Heart right ventricle (tissue), 16 donors: ENCODE measurements at regions of chr6 and their contacts with region 1.

Region 1: DNA sequence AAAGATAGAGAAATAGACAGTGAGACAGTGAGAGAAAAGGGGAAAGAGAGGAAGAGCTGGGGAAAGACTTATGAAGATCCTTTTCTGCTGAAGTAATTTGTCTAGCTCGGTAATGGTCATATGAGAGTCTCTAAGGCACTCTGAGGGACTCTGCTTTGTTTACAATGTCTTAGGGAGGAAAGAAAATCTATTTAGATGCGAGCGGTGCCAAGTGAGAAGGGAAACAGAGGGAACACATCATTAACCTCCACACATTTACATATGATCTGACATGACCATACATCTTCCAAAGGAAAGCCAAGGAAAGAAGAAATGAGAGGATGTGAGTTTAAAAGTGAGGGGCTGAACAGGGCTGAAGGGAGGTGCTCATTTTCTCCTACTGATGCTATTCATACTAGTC is 862.3 kb upstream of the CITED2 start:
- DNase-seq: no peak
- ATAC-seq: no peak
- H3K4me3 ChIP-seq: no peak overlapping the region
- H3K27ac ChIP-seq: no peak overlapping the region
- H3K4me1 ChIP-seq: no peaks in the 10 kb centered on the region
- H3K27me3 ChIP-seq: no peaks in the 10 kb centered on the region
- CTCF ChIP-seq: no peak

Region 2: GRCh38 chr6:139778688-139779087 is 458.0 kb before region 1 on chr6:
- intact Hi-C with region 1: no loop called
- DNase-seq: peak in 1 of 2 donors; percentile 16
- ATAC-seq: peak in 7 of 8 donors; percentile 61 to 95 (median 92)
- H3K4me3 ChIP-seq: no peak overlapping the region
- H3K27ac ChIP-seq: peak overlapping the region in 5 of 10 donors; percentile 45 to 72 (median 69)
- H3K4me1 ChIP-seq: peaks cover 0 to 16% (median 0%) of the 10 kb centered on the region in 9 donors
- H3K27me3 ChIP-seq: no peaks in the 10 kb centered on the region
- CTCF ChIP-seq: no peak

Region 3: GRCh38 chr6:140124498-140124897 is 112.2 kb before region 1 on chr6:
- intact Hi-C with region 1: loop called in 1 of 10 experiments (anchors 1 kb)
- DNase-seq: no peak
- ATAC-seq: no peak
- H3K4me3 ChIP-seq: no peak overlapping the region
- H3K27ac ChIP-seq: no peak overlapping the region
- H3K4me1 ChIP-seq: no peaks in the 10 kb centered on the region
- H3K27me3 ChIP-seq: no peaks in the 10 kb centered on the region
- CTCF ChIP-seq: no peak

Region 4: GRCh38 chr6:140183881-140184280 is 52.9 kb before region 1 on chr6:
- intact Hi-C with region 1: no loop called
- DNase-seq: no peak
- ATAC-seq: no peak
- H3K4me3 ChIP-seq: no peak overlapping the region
- H3K27ac ChIP-seq: no peak overlapping the region
- H3K4me1 ChIP-seq: no peaks in the 10 kb centered on the region
- H3K27me3 ChIP-seq: no peaks in the 10 kb centered on the region
- CTCF ChIP-seq: no peak